Activated CD4-positive, alpha-beta memory T cell treated with anti-CD3 and anti-CD28 coated beads for 36 hours (primary cell): ENCODE measurements at regions of chr20 and their contacts with region 1.

Region 1: DNA sequence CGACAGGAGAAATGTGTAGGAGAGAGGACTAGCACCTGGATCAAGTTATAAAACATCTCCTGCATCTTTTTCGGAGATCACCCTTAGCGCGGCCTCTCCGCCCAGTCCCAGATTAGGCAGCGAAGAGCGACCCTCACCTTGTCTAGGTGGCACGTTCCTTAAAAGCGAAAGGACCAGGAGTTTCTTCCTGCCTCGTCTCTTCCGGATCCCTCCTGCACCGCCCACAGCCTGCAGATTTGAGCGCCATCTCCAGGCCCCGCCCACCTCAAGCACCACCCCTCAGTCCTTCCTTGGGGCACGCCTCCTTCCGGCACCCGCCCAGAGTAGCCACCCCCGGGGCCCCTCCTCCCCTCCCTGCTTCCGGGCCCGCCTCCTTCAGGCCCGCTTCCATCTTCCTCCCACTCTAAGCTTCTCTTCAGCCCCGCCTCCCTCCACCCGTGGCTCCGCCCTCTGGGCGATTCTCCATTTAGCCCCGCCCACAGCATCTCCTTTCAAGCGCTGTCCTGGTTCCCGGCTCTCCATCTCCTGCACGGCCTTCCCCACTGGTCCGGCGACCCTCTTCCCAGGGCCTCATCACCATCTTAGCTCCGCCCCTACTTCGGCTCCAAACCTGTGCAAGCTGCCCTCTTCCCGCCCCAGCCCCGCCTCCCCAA is 662 bp upstream of the RALY start:
- DNase-seq: peak; percentile 100
- H3K4me3 Mint-ChIP-seq: peak overlapping the region; percentile 91
- H3K27ac Mint-ChIP-seq: peak overlapping the region; percentile 98
- H3K4me1 Mint-ChIP-seq: peaks cover 55% of the 10 kb centered on the region
- H3K27me3 Mint-ChIP-seq: no peaks in the 10 kb centered on the region

Region 2: DNA sequence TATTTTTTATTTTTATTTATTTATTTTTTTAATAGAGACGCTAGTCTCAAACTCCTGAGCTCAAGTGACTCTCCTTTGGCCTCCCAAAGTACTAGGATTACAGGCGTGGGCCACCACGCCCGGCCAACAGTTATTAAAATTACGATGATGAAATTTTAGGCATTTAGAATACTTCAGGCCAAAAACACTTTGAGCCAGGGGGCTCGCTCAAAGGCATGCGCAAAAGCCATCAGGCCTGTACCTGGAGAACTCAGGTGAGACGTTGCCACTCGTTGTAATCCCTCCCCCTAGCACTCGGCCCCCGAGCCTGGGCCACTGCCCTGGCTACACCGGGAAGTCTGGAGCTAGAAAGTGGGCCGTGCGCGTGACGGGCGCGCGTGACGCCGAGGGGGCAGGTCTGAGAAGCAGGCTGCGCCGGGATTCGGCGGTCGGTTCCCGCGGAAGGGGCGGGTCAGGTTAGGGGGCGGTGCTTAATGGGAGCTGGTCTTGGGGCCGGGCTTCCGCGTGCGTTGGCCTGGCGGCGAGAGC is 503.5 kb before region 1 on chr20:
- CTCF ChIA-PET with region 1: no interaction called
- POLR2A ChIA-PET with region 1: no interaction called
- intact Hi-C with region 1: loop called (anchors 5 kb)
- DNase-seq: peak; percentile 100
- H3K4me3 Mint-ChIP-seq: peak overlapping the region; percentile 83
- H3K27ac Mint-ChIP-seq: peak overlapping the region; percentile 77
- H3K4me1 Mint-ChIP-seq: peaks cover 12% of the 10 kb centered on the region
- H3K27me3 Mint-ChIP-seq: no peaks in the 10 kb centered on the region

Region 3: DNA sequence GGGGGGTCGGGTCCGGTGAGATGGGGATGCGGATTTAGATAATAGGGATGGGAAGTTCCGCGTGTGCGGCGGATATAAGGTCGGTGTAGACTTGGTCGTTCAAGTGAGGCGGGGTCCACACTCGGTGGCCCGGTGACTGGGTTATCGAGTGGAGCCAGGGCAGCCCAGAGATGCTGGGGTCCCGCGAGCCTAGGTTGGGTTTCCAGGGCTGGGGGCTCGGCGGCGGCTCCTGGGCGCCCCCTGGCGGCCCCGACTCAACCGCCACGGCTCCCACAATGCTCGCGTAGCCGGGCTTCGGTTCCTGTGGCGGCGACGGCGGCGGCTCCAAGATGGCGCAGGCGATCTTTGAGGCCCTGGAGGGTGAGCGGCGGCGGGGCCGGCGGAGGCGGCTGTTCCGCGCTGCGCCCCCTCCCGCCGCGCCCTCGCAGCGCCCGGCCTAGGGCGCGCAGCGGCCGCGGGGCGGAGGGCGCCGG is 261.3 kb before region 1 on chr20 and contains the start of gene ZNF341:
- CTCF ChIA-PET with region 1: no interaction called
- POLR2A ChIA-PET with region 1: no interaction called
- intact Hi-C with region 1: loop called (anchors 5 kb)
- DNase-seq: peak; percentile 92
- H3K4me3 Mint-ChIP-seq: peak within 1 kb of the TSS; percentile 75
- H3K27ac Mint-ChIP-seq: peak within 1 kb of the TSS; percentile 82
- H3K4me1 Mint-ChIP-seq: peaks cover 19% of the 10 kb centered on the region
- H3K27me3 Mint-ChIP-seq: no peaks in the 10 kb centered on the region
- total RNA-seq, gene ZNF341: 5.9 TPM

Region 4: GRCh38 chr20:34037121-34037520 is 44.1 kb after region 1 on chr20:
- CTCF ChIA-PET with region 1: no interaction called
- POLR2A ChIA-PET with region 1: no interaction called
- intact Hi-C with region 1: loop called (anchors 2 kb)
- DNase-seq: peak; percentile 79
- H3K4me3 Mint-ChIP-seq: no peak overlapping the region
- H3K27ac Mint-ChIP-seq: peak overlapping the region; percentile 72
- H3K4me1 Mint-ChIP-seq: peaks cover 71% of the 10 kb centered on the region
- H3K27me3 Mint-ChIP-seq: no peaks in the 10 kb centered on the region

Region 5: DNA sequence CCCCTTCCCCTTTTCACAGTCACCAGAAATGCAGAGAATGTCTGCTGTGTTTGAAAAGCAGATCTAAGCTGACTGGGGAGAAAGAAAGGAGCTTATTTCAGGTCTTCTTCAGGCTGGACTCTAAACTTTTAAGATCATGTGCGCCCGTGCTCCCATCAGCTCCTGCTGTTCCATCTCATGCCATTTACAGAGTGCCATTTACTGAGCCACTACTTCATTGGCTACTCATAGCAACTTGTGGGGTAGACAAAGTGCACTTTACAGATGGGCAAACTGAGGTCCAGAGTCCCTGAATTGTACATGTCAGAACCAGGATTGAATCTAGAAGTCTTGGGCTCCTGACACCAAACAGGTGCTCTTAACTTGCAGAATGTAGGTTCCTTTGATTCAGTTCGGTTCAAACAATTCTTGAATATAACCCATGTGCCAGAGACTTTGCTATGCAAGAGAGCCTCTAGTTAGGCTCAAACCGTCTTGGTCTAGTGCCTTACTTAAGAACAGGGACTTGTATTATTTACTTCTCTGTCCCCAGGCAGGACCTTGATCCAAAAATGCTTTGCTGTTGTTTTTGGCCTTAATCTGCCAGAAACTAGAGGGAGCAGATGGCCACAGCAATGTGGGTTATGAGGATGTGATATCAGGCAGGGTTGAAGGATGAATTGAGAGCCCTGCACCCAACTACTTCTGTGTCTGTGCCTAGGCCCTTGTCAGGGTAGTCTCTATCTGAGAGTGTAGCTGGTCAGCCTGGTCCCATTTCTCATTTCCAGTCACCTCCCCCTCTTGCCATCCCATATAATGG is 57.0 kb after region 1 on chr20:
- CTCF ChIA-PET with region 1: no interaction called
- POLR2A ChIA-PET with region 1: no interaction called
- intact Hi-C with region 1: no loop called
- DNase-seq: no peak
- H3K4me3 Mint-ChIP-seq: no peak overlapping the region
- H3K27ac Mint-ChIP-seq: no peak overlapping the region
- H3K4me1 Mint-ChIP-seq: peaks cover 80% of the 10 kb centered on the region
- H3K27me3 Mint-ChIP-seq: no peaks in the 10 kb centered on the region

Region 6: DNA sequence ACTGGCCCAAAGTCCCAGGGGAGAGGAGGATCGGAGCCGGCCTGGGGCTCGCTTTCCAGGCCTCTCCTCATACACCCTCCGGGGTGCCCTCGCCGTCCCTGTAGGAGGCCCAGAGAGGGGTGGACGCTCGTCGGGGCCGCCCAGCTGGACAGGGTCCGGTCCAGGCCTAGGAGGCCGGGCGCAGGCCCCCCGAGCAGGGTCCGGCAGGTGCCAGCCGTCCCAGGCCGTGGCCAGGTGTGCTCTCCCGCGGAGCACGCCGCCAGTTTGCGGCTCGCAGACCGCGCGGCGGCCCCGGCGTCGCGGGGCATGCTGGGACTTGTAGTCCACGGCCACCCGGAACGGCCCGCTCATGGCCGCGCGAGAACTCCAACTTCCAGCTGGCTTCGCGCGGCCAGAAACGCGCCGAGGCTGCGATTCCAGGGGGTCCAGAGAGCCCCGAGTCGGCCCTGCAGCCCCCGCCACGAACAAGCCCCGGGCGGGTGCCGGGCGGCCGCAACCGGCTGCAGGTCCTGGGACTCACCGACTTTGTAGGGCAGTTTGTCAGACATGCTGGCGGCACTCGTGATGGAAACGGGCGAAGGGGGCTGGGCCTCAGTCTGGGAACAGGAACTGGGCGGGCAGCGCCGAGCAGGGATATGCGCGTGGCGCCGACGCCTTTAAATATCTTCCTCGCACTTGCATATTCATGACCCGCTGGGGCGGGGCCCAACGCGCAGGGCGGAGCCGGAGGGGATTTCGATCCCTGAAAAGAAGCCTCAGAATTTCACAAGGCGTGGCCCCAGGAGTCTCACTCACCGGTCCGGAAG is 309.9 kb after region 1 on chr20 and contains the start of gene AHCY:
- CTCF ChIA-PET with region 1: no interaction called
- POLR2A ChIA-PET with region 1: no interaction called
- intact Hi-C with region 1: loop called (anchors 1 kb)
- DNase-seq: peak; percentile 97
- H3K4me3 Mint-ChIP-seq: peak within 1 kb of the TSS; percentile 89
- H3K27ac Mint-ChIP-seq: peak within 1 kb of the TSS; percentile 84
- H3K4me1 Mint-ChIP-seq: peaks cover 22% of the 10 kb centered on the region
- H3K27me3 Mint-ChIP-seq: no peaks in the 10 kb centered on the region
- total RNA-seq, gene AHCY: 160 to 163 TPM